Mammary epithelial cell (primary cell): ENCODE measurements at regions of chr13 and their contacts with region 1.

Region 1: DNA sequence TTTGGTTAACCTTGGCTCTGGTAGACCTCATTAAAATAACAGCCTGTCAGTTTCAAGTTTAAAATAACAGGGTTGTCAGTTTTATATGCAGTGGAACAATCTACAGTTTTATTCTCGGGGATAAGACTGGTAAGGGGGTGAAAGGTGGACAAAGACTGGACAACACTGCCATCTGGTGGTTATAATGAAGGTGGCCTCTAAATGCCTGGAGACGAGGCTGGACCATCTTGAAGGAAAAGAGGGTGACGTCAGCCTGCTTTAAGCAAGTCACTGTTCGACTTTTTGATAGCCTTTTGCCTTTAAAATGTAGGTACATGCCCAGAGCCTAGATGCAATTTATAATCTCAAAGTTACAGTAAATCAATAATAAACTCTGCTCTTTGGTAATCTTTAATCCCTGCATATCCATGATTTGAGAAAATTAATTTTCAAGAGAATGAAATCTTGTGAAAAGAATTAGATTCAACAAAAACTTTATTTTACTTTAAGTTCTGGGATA is 117.0 kb downstream of the DCT start:
- DNase-seq: peak; percentile 67
- H3K4me3 ChIP-seq: no peak overlapping the region
- H3K27ac ChIP-seq: no peak overlapping the region
- H3K4me1 ChIP-seq: no peaks in the 10 kb centered on the region
- H3K27me3 ChIP-seq: no peaks in the 10 kb centered on the region
- CTCF ChIP-seq: peak; percentile 84 to 91

Region 2: GRCh38 chr13:92716749-92717148 is 1645.7 kb before region 1 on chr13:
- CTCF ChIA-PET with region 1: no interaction called
- dilution Hi-C with region 1: no loop called
- in situ Hi-C with region 1: loop called in 1 of 2 experiments (anchors 25 kb)
- intact Hi-C with region 1: loop called (anchors 5 kb)
- DNase-seq: peak; percentile 2
- H3K4me3 ChIP-seq: no peak overlapping the region
- H3K27ac ChIP-seq: no peak overlapping the region
- H3K4me1 ChIP-seq: no peaks in the 10 kb centered on the region
- H3K27me3 ChIP-seq: no peaks in the 10 kb centered on the region
- CTCF ChIP-seq: peak; percentile 24 to 34

Region 3: DNA sequence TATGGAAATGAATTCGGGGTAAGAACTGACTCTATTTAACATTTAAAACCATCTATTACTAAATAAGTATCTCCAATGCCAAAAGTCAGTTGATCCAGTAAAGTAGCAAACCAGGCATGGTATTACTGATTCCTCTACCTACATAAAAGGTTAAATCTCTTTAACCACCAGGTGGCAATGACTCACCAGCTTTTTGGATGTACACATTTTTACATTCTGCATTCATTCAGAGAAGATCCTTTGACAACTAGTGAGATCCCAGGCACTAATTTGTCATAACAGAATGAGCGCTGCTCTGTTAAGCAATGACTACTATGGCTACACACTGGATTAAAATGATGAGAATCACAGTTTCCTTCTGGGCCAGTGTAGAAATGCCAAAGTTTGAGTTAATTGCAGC is 1465.6 kb before region 1 on chr13:
- CTCF ChIA-PET with region 1: no interaction called
- dilution Hi-C with region 1: no loop called
- in situ Hi-C with region 1: no loop called
- intact Hi-C with region 1: loop called (anchors 1 kb)
- DNase-seq: peak; percentile 58
- H3K4me3 ChIP-seq: no peak overlapping the region
- H3K27ac ChIP-seq: no peak overlapping the region
- H3K4me1 ChIP-seq: no peaks in the 10 kb centered on the region
- H3K27me3 ChIP-seq: peaks cover 4% of the 10 kb centered on the region
- CTCF ChIP-seq: peak; percentile 39 to 43